Panc1 (cell line): ENCODE measurements at regions of chr21 and their contacts with region 1.

Region 1: GRCh38 chr21:32653311-32653901 is 41.2 kb upstream of the CFAP298 start:
- DNase-seq: peak; percentile 24
- ATAC-seq: no peak; the same call in 1 of the 2 replicates
- H3K4me3 ChIP-seq: no peak overlapping the region
- H3K27ac ChIP-seq: no peak overlapping the region
- H3K4me1 ChIP-seq: no peaks in the 10 kb centered on the region
- H3K27me3 ChIP-seq: no peaks in the 10 kb centered on the region
- CTCF ChIP-seq: peak; percentile 75

Region 2: GRCh38 chr21:32727687-32728455 is 74.5 kb after region 1 on chr21 and contains the start of gene SYNJ1:
- CTCF ChIA-PET with region 1: no interaction called
- POLR2A ChIA-PET with region 1: no interaction called
- in situ Hi-C with region 1: no loop called
- intact Hi-C with region 1: loop called (anchors 2 kb)
- DNase-seq: no peak
- ATAC-seq: peak; percentile 97
- H3K4me3 ChIP-seq: peak within 1 kb of the TSS; percentile 83 to 96
- H3K27ac ChIP-seq: peak within 1 kb of the TSS; percentile 72
- H3K4me1 ChIP-seq: peaks cover 4% of the 10 kb centered on the region
- H3K27me3 ChIP-seq: no peaks in the 10 kb centered on the region
- CTCF ChIP-seq: no peak
- total RNA-seq, gene SYNJ1: 10.5 TPM

Region 3: GRCh38 chr21:32826329-32827167 is 173.1 kb after region 1 on chr21:
- CTCF ChIA-PET with region 1: no interaction called
- POLR2A ChIA-PET with region 1: no interaction called
- in situ Hi-C with region 1: no loop called
- intact Hi-C with region 1: loop called (anchors 2 kb)
- DNase-seq: peak; percentile 32
- ATAC-seq: peak; percentile 99
- H3K4me3 ChIP-seq: no peak overlapping the region
- H3K27ac ChIP-seq: no peak overlapping the region
- H3K4me1 ChIP-seq: no peaks in the 10 kb centered on the region
- H3K27me3 ChIP-seq: no peaks in the 10 kb centered on the region
- CTCF ChIP-seq: peak; percentile 69